ENCODE measurements at regions of chr1 and their contacts with region 1.

Region 1: DNA sequence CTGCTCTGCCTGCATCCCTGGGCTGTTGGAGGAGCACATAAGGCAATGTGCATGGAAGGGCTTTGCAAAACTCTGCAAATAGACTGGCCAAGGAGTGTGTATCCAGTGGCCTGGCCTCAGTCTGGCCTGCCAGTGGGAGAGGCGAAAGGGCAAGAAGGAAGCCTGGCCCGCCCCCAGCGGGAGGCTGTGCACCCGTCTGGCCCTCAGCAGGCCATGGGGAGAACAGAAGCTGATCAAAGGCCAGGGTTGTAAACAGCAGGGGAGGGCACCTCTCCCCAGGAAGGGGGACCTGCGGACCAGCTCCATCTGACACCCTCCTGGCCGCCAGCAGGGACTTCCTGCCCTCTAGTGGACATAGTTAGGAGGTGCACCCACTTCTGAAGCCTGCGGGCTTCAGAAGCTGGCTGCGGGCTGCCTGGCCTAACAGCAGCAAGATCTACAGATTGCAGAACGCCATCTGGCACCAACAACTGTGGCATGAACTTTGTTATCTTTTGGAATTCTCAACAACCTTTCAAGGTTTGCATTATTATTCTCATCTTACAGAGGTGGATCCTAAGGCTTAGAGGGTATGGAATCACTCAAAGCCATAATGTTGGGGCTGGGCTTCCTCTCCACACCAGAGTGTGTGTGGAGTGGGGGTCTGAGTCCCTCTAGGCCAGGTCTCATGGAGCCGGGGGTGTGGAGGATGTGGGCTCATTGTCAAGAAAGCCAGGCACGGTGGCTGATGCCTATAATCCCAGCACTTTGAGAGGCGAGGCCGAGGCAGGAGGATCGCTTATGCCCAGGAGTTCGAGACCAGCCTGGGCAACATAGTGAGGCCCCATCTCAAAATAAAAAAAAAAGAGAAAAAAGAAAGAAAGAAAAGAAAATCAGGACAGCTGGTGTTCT is 18.9 kb upstream of the CDK18 start:
- DNase-seq: peak; percentile 85
- H3K4me3 Mint-ChIP-seq: no peak overlapping the region
- H3K27ac Mint-ChIP-seq: no peak overlapping the region
- H3K4me1 Mint-ChIP-seq: peaks cover 32% of the 10 kb centered on the region
- H3K27me3 Mint-ChIP-seq: peaks cover 73% of the 10 kb centered on the region
- CTCF ChIP-seq: peak; percentile 99

Region 2: GRCh38 chr1:205227584-205228006 is 258.0 kb before region 1 on chr1 and contains the start of gene TMCC2:
- CTCF ChIA-PET with region 1: no interaction called
- intact Hi-C with region 1: no loop called
- DNase-seq: peak; percentile 86
- H3K4me3 Mint-ChIP-seq: peak within 1 kb of the TSS; percentile 66
- H3K27ac Mint-ChIP-seq: peak within 1 kb of the TSS; percentile 2
- H3K4me1 Mint-ChIP-seq: peaks cover 28% of the 10 kb centered on the region
- H3K27me3 Mint-ChIP-seq: peaks cover 13% of the 10 kb centered on the region
- CTCF ChIP-seq: no peak
- total RNA-seq, gene TMCC2: 0.33 and 0.37 TPM in 2 replicates

Region 3: DNA sequence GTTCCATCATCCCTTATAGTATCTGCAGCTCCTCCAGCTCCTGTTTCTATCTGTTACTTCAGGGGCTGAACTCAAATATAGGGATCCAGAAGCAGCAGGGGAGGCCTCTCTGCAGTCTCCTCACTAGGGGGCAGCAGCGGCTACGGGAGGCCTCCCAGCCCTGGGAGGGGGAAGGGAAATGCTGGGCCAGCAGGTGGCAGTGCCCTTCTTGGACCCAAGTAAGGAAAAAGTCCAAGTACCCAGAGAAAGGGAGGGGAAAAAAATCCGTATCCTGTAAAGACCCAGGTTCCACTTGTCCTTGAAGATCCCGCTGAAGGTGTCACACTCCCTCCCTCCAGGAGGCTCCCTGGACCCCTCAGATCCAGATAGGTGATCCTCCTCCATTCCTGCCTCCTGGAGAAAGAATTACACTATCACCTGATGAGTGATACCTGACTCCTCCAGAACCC is 149.9 kb before region 1 on chr1:
- CTCF ChIA-PET with region 1: interaction called, 22 read pairs
- intact Hi-C with region 1: loop called (anchors 5 kb)
- DNase-seq: peak; percentile 95
- H3K4me3 Mint-ChIP-seq: no peak overlapping the region
- H3K27ac Mint-ChIP-seq: no peak overlapping the region
- H3K4me1 Mint-ChIP-seq: no peaks in the 10 kb centered on the region
- H3K27me3 Mint-ChIP-seq: peaks cover 69% of the 10 kb centered on the region
- CTCF ChIP-seq: peak; percentile 96

Region 4: GRCh38 chr1:205396967-205397616 is 88.5 kb before region 1 on chr1:
- CTCF ChIA-PET with region 1: interaction called, 43 read pairs
- intact Hi-C with region 1: loop called (anchors 1 kb)
- DNase-seq: peak; percentile 41
- H3K4me3 Mint-ChIP-seq: no peak overlapping the region
- H3K27ac Mint-ChIP-seq: no peak overlapping the region
- H3K4me1 Mint-ChIP-seq: no peaks in the 10 kb centered on the region
- H3K27me3 Mint-ChIP-seq: peaks cover 18% of the 10 kb centered on the region
- CTCF ChIP-seq: peak; percentile 84

Region 5: GRCh38 chr1:205422993-205423625 is 62.5 kb before region 1 on chr1:
- CTCF ChIA-PET with region 1: interaction called, 33 read pairs
- intact Hi-C with region 1: loop called (anchors 1 kb)
- DNase-seq: no peak
- H3K4me3 Mint-ChIP-seq: no peak overlapping the region
- H3K27ac Mint-ChIP-seq: no peak overlapping the region
- H3K4me1 Mint-ChIP-seq: no peaks in the 10 kb centered on the region
- H3K27me3 Mint-ChIP-seq: peaks cover 75% of the 10 kb centered on the region
- CTCF ChIP-seq: no peak

Region 6: GRCh38 chr1:205440476-205441317 is 44.9 kb before region 1 on chr1:
- CTCF ChIA-PET with region 1: interaction called, 62 read pairs
- intact Hi-C with region 1: loop called (anchors 1 kb)
- DNase-seq: peak; percentile 96
- H3K4me3 Mint-ChIP-seq: peak overlapping the region; percentile 36
- H3K27ac Mint-ChIP-seq: peak overlapping the region; percentile 93
- H3K4me1 Mint-ChIP-seq: peaks cover 63% of the 10 kb centered on the region
- H3K27me3 Mint-ChIP-seq: no peaks in the 10 kb centered on the region
- CTCF ChIP-seq: no peak

Region 7: DNA sequence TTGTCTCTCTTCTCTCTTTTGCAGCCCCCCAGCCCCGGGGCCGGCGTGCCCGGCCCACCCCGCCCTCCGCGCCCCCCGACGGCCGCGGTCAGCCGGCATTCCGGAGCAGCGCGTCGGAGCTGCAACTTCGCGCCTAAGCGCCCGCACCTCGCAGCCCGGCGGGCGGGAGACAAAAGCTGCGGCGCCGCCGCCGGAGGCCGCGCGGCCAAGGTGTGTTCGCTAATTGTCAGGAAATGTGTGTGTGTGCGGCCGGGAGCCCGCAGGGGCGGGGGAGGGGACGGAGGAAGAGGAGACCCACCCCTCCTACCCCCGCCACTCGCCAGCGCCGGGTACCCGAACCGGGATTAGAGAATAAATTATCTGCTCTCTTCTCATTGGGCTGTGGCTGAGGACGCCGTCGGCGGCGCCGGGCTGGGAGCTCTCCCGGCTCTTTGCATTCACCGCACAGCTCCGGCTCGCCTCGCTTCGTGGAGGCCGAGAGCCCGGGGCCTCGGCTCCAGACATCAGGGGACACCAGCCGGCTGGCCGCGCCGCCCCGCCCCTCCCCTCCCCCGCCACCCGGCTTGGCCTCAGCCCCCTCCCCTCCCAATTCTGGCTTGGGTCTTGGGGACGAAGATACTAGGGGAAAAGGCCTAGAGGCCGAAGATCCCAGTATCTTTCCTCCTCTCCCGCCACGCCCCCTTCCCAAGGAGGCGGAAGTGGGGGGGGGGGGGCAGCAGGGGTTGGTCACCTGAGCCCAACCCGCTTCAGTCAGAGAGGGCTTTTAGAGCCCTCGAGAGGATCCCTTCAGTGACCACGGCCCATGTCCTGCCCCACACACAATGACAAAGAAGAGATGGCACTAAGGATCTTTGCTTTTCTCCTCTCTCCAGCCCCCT is 28.5 kb before region 1 on chr1:
- CTCF ChIA-PET with region 1: interaction called, 12 read pairs
- intact Hi-C with region 1: no loop called
- DNase-seq: peak; percentile 43
- H3K4me3 Mint-ChIP-seq: peak overlapping the region; percentile 7
- H3K27ac Mint-ChIP-seq: no peak overlapping the region
- H3K4me1 Mint-ChIP-seq: peaks cover 17% of the 10 kb centered on the region
- H3K27me3 Mint-ChIP-seq: peaks cover 81% of the 10 kb centered on the region
- CTCF ChIP-seq: no peak

Region 8: DNA sequence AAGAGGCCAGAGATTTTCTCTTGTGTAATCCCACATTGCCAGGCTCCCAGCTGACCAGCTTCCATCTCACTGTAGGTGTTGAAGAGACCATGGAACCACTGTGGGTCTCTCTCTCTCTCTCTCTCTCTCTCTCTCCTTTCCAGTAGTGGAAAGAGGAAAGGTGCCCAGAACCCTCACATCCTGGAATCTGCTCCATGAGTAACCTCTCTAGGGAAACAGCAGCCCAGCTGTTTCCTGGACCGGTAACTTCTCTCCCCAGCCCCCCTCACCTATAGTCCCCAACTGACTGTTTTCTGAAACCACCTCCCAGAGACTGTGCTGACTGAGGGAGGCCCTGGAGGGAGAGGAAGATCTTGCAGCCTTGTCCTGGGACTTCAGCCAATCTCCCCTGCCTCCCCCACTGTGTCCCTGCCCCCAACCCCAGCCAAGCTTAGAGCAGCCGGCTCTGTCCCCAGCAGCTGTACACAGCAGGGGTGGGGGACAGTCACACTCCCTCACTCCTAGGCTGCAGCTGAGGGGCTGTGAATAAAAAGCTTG is 215.3 kb after region 1 on chr1:
- CTCF ChIA-PET with region 1: no interaction called
- intact Hi-C with region 1: no loop called
- DNase-seq: no peak
- H3K4me3 Mint-ChIP-seq: no peak overlapping the region
- H3K27ac Mint-ChIP-seq: no peak overlapping the region
- H3K4me1 Mint-ChIP-seq: no peaks in the 10 kb centered on the region
- H3K27me3 Mint-ChIP-seq: no peaks in the 10 kb centered on the region
- CTCF ChIP-seq: no peak

Region 9: GRCh38 chr1:205711104-205712020 is 225.8 kb after region 1 on chr1:
- CTCF ChIA-PET with region 1: no interaction called
- intact Hi-C with region 1: no loop called
- DNase-seq: peak; percentile 77
- H3K4me3 Mint-ChIP-seq: no peak overlapping the region
- H3K27ac Mint-ChIP-seq: peak overlapping the region; percentile 60
- H3K4me1 Mint-ChIP-seq: peaks cover 22% of the 10 kb centered on the region
- H3K27me3 Mint-ChIP-seq: no peaks in the 10 kb centered on the region
- CTCF ChIP-seq: peak; percentile 76

Region 10: GRCh38 chr1:205907794-205908193 is 422.2 kb after region 1 on chr1:
- CTCF ChIA-PET with region 1: no interaction called
- intact Hi-C with region 1: no loop called
- DNase-seq: peak; percentile 69
- H3K4me3 Mint-ChIP-seq: no peak overlapping the region
- H3K27ac Mint-ChIP-seq: no peak overlapping the region
- H3K4me1 Mint-ChIP-seq: no peaks in the 10 kb centered on the region
- H3K27me3 Mint-ChIP-seq: peaks cover 18% of the 10 kb centered on the region
- CTCF ChIP-seq: peak; percentile 90

Measured in Calu3 (cell line).